Psoas muscle (tissue), 8 donors: ENCODE measurements at regions of chr13 and their contacts with region 1.

Region 1: GRCh38 chr13:39415008-39415802 is 187.8 kb downstream of the LHFPL6 start:
- DNase-seq: peak; percentile 41 to 70
- ATAC-seq: peak; percentile 40 to 77 (median 62)
- H3K4me3 ChIP-seq: no peak overlapping the region
- H3K27ac ChIP-seq: peak overlapping the region; percentile 0
- H3K4me1 ChIP-seq: peaks cover 8% of the 10 kb centered on the region
- H3K27me3 ChIP-seq: no peaks in the 10 kb centered on the region
- CTCF ChIP-seq: peak; percentile 48

Region 2: DNA sequence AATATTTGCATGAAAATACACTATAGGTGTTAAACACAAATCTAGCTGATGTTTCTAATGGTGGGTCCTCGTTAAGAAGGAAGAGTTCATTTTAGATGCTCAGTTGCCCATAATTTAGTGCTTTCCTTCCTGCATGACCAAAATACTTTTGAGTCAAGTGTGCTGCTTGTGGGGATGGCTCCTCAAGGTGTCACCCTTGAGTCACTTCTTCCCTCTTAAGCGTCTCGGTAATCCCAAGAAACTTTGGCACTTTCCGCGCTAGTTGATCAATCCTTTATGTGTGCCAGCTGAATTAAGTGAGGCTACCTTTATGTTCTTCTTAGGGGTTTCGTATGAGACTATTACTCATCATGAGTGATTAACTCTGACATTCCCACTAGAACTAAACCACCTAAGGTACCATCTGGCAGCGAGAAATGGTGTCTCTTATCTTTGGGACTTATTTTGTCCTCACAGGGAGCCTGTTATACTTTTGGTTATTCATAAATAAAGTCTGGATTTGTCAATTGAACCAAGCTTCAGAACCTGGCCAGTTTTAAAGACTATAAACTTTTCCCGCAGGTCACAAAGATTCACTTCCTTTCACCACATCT is 270.2 kb before region 1 on chr13:
- intact Hi-C with region 1: loop called in 1 of 2 experiments (anchors 10 kb)
- DNase-seq: peak; percentile 39 to 56
- ATAC-seq: peak in 3 of 4 donors; percentile 42 to 74 (median 71)
- H3K4me3 ChIP-seq: peak overlapping the region; percentile 12
- H3K27ac ChIP-seq: no peak overlapping the region
- H3K4me1 ChIP-seq: no peaks in the 10 kb centered on the region
- H3K27me3 ChIP-seq: no peaks in the 10 kb centered on the region
- CTCF ChIP-seq: peak; percentile 68

Region 3: DNA sequence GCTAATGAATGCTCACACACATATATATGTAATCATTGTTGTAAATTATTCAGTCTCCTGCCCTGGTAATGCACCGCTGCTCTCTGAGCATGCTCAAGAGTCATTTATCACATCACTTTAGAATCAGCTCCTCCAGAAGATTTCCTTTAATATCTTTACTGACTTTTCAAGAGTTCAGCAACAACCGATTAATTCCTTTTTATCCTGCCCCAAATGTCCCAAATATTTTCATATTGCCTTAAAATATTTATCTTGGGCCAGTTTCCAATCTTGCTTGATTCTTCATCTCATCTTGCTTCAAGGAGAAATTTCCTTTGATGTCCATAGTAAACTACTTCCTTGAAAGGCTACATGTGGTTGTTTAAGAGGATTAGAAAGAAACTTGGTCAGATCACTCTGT is 244.5 kb before region 1 on chr13:
- intact Hi-C with region 1: no loop called
- DNase-seq: no peak
- ATAC-seq: no peak
- H3K4me3 ChIP-seq: no peak overlapping the region
- H3K27ac ChIP-seq: no peak overlapping the region
- H3K4me1 ChIP-seq: no peaks in the 10 kb centered on the region
- H3K27me3 ChIP-seq: no peaks in the 10 kb centered on the region
- CTCF ChIP-seq: no peak